Activated CD8-positive, alpha-beta memory T cell treated with anti-CD3 and anti-CD28 coated beads, Interleukin-2, amount 10 ng/mL, durations not matched to agents 7 days and 5 days (primary cell): ENCODE measurements at regions of chr2 and their contacts with region 1.

Region 1: DNA sequence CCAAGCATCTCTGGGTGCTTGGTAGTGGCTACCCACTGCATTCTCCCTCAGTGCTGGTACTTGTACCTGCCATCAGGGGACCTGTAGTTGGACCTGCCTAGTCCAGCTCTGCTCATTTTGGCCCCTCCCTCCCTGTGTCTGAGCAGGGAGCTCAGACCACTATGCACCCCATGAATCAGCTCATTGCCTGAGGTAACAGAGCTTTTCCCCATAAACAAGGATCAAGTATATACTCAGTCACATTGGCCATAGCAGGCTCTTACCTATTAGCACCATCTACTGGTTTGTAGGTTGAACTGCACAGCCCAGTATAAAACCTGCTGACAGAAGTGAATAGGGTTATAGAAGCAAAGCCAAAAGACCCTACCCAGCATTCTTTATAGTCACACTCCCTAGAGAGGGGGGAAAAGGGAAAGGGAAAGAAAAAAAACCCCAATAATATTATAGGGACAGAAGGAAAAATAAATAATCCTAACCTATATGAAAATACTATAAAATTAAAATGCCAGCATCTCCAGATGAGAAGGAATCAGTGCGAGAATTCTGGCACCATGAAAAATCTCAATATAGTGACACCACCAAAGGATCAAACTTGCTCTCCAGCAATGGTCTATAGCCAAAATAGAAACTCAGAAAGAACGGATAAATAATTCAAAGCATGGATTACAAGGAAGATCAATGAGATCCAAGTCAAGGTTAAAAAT is 6.9 kb upstream of the FLACC1 start:
- DNase-seq: peak; percentile 45
- ATAC-seq: peak; percentile 82
- H3K4me3 Mint-ChIP-seq: no peak overlapping the region
- H3K27ac Mint-ChIP-seq: peak overlapping the region; percentile 78
- H3K4me1 Mint-ChIP-seq: peaks cover 25% of the 10 kb centered on the region
- H3K27me3 Mint-ChIP-seq: no peaks in the 10 kb centered on the region

Region 2: DNA sequence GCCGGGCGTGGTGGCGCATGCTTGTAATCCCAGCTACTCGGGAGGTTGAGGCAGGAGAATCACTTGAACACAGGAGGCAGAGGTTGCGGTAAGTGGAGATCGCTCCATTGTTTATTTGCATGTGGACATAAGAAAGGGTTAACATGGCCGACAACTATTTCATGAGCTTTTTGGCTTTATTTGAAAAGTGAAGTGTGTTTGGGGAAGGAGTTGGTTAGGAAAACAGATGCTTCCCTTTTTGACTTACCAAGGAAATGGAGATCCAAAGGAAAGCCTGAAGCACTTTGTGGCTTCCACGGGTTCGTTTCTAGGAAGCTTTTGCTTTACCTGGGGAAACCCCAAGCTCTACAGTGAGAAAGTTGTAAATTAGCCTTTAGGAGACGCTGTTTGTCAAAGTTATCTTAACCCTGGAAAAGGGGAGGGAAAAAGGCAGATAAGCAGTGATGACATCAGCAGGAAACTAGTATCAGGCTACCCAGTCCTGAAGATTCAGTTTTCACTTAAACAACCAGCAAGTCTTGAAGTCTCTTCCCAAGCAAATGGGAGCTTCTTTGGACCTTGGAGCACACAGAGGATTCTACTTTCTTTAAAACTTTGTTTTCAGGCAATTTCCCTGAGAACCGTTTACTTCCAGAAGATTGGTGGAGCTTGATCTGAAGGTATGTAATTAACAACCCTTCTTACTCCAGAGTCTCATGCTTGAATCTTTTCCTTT is 181.2 kb before region 1 on chr2 and contains the start of gene CASP10:
- CTCF ChIA-PET with region 1: interaction called, 13 read pairs
- DNase-seq: peak; percentile 48
- ATAC-seq: peak; percentile 82
- H3K4me3 Mint-ChIP-seq: peak within 1 kb of the TSS; percentile 94
- H3K27ac Mint-ChIP-seq: peak within 1 kb of the TSS; percentile 88
- H3K4me1 Mint-ChIP-seq: peaks cover 55% of the 10 kb centered on the region
- H3K27me3 Mint-ChIP-seq: no peaks in the 10 kb centered on the region
- total RNA-seq, gene CASP10: 26.6 to 37.4 TPM

Region 3: GRCh38 chr2:201242571-201243277 is 121.3 kb before region 1 on chr2:
- CTCF ChIA-PET with region 1: interaction called, 28 read pairs
- DNase-seq: no peak
- ATAC-seq: no peak
- H3K4me3 Mint-ChIP-seq: no peak overlapping the region
- H3K27ac Mint-ChIP-seq: no peak overlapping the region
- H3K4me1 Mint-ChIP-seq: peaks cover 27% of the 10 kb centered on the region
- H3K27me3 Mint-ChIP-seq: no peaks in the 10 kb centered on the region

Region 4: GRCh38 chr2:201257956-201258665 is 105.9 kb before region 1 on chr2:
- CTCF ChIA-PET with region 1: interaction called, 23 read pairs
- DNase-seq: peak; percentile 98
- ATAC-seq: peak; percentile 65
- H3K4me3 Mint-ChIP-seq: peak overlapping the region; percentile 83
- H3K27ac Mint-ChIP-seq: peak overlapping the region; percentile 98
- H3K4me1 Mint-ChIP-seq: peaks cover 66% of the 10 kb centered on the region
- H3K27me3 Mint-ChIP-seq: no peaks in the 10 kb centered on the region

Region 5: DNA sequence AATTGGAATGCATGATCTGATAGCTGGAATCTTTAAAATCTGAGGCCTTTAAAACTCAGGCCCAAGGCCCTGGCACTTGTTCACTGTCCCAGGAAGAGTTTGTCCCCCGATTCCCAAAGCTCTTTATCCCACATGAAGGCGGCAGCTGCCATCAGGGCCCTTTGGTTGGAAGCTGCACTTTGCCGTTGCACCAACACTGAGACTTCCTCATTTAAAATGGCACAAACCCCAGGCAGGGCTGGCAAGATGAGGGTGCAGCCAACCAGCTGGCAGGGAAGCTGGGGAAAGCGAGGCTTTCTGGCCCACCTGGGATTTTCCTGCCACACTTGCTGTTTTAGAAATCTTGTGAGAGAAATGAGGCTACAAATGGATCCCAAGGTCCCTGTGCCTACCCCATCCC is 13.1 kb before region 1 on chr2:
- CTCF ChIA-PET with region 1: interaction called, 14 read pairs
- DNase-seq: no peak
- ATAC-seq: no peak
- H3K4me3 Mint-ChIP-seq: no peak overlapping the region
- H3K27ac Mint-ChIP-seq: no peak overlapping the region
- H3K4me1 Mint-ChIP-seq: no peaks in the 10 kb centered on the region
- H3K27me3 Mint-ChIP-seq: no peaks in the 10 kb centered on the region